ENCODE measurements at regions of chr2 and their contacts with region 1.

Region 1: GRCh38 chr2:198016243-198016642 is 211.8 kb downstream of the PLCL1 start:
- DNase-seq: no peak
- H3K4me3 ChIP-seq: no peak overlapping the region
- H3K27ac ChIP-seq: no peak overlapping the region
- H3K4me1 ChIP-seq: no peaks in the 10 kb centered on the region
- H3K27me3 ChIP-seq: no peaks in the 10 kb centered on the region
- CTCF ChIP-seq: no peak
- POLR2A ChIP-seq: no peak

Region 2: GRCh38 chr2:197079832-197080555 is 936.2 kb before region 1 on chr2:
- intact Hi-C with region 1: loop called (anchors 10 kb)
- DNase-seq: no peak
- H3K4me3 ChIP-seq: no peak overlapping the region
- H3K27ac ChIP-seq: no peak overlapping the region
- H3K4me1 ChIP-seq: no peaks in the 10 kb centered on the region
- H3K27me3 ChIP-seq: no peaks in the 10 kb centered on the region
- CTCF ChIP-seq: no peak
- POLR2A ChIP-seq: no peak

Region 3: GRCh38 chr2:197416268-197416667 is 600.0 kb before region 1 on chr2:
- intact Hi-C with region 1: no loop called
- DNase-seq: no peak
- H3K4me3 ChIP-seq: no peak overlapping the region
- H3K27ac ChIP-seq: no peak overlapping the region
- H3K4me1 ChIP-seq: no peaks in the 10 kb centered on the region
- H3K27me3 ChIP-seq: no peaks in the 10 kb centered on the region
- CTCF ChIP-seq: no peak
- POLR2A ChIP-seq: no peak

Region 4: GRCh38 chr2:198000417-198000816 is 15.8 kb before region 1 on chr2:
- intact Hi-C with region 1: loop called (anchors 2 kb)
- DNase-seq: no peak
- H3K4me3 ChIP-seq: no peak overlapping the region
- H3K27ac ChIP-seq: no peak overlapping the region
- H3K4me1 ChIP-seq: no peaks in the 10 kb centered on the region
- H3K27me3 ChIP-seq: no peaks in the 10 kb centered on the region
- CTCF ChIP-seq: no peak
- POLR2A ChIP-seq: no peak

Region 5: GRCh38 chr2:198053776-198054698 is 37.8 kb after region 1 on chr2:
- intact Hi-C with region 1: no loop called
- DNase-seq: peak in 1 of 2 donors; percentile 19
- H3K4me3 ChIP-seq: no peak overlapping the region
- H3K27ac ChIP-seq: no peak overlapping the region
- H3K4me1 ChIP-seq: no peaks in the 10 kb centered on the region
- H3K27me3 ChIP-seq: no peaks in the 10 kb centered on the region
- CTCF ChIP-seq: peak in 1 of 3 donors; percentile 19
- POLR2A ChIP-seq: no peak

Region 6: GRCh38 chr2:198100346-198100745 is 84.1 kb after region 1 on chr2:
- intact Hi-C with region 1: no loop called
- DNase-seq: no peak
- H3K4me3 ChIP-seq: no peak overlapping the region
- H3K27ac ChIP-seq: no peak overlapping the region
- H3K4me1 ChIP-seq: no peaks in the 10 kb centered on the region
- H3K27me3 ChIP-seq: no peaks in the 10 kb centered on the region
- CTCF ChIP-seq: no peak
- POLR2A ChIP-seq: no peak

Region 7: GRCh38 chr2:198825534-198825933 is 809.3 kb after region 1 on chr2:
- intact Hi-C with region 1: no loop called
- DNase-seq: no peak
- H3K4me3 ChIP-seq: no peak overlapping the region
- H3K27ac ChIP-seq: no peak overlapping the region
- H3K4me1 ChIP-seq: no peaks in the 10 kb centered on the region
- H3K27me3 ChIP-seq: no peaks in the 10 kb centered on the region
- CTCF ChIP-seq: no peak
- POLR2A ChIP-seq: no peak

Measured in breast epithelium (tissue), 4 donors.